Mucosa of descending colon (tissue), 3 donors: ENCODE measurements at regions of chr1 and their contacts with region 1.

Region 1: GRCh38 chr1:184881941-184882913 is 92.1 kb downstream of the NIBAN1 start:
- DNase-seq: no peak
- ATAC-seq: peak; percentile 29
- H3K4me3 ChIP-seq: no peak overlapping the region
- H3K4me1 ChIP-seq: no peaks in the 10 kb centered on the region
- CTCF ChIP-seq: no peak

Region 2: DNA sequence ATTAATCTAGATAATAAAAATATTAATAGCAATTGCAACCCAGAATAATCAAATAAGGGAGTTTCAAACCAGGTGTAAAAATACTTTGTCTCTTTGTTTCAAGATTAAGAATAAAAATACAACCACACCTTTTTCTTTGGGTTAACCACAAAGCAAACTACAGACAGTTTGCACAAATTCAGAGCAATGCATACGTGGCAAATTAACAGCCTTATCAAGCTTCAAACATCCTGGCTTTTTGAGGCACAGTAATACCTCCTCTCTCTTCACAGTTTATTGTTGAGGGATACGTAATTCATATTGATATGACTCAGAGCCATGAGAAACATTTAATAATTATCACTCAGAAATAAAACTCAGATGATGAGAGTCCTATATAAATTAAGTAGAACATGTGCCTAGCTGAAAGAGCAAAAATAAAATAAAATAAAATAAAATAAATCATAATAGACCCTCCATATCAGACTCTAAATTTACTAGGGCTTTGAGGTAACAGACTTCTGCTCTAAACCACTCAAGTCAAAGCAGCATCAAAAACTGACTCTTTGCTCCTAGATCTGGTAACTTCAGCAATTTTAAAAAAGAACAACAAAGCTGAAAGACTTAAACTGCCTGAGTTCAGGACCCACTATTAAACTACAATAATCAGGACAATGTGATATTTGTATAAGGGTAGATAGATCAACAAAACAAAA is 139.0 kb before region 1 on chr1:
- intact Hi-C with region 1: no loop called
- DNase-seq: no peak
- ATAC-seq: peak; percentile 78
- H3K4me3 ChIP-seq: no peak overlapping the region
- H3K4me1 ChIP-seq: peaks cover 13% of the 10 kb centered on the region
- CTCF ChIP-seq: no peak

Region 3: DNA sequence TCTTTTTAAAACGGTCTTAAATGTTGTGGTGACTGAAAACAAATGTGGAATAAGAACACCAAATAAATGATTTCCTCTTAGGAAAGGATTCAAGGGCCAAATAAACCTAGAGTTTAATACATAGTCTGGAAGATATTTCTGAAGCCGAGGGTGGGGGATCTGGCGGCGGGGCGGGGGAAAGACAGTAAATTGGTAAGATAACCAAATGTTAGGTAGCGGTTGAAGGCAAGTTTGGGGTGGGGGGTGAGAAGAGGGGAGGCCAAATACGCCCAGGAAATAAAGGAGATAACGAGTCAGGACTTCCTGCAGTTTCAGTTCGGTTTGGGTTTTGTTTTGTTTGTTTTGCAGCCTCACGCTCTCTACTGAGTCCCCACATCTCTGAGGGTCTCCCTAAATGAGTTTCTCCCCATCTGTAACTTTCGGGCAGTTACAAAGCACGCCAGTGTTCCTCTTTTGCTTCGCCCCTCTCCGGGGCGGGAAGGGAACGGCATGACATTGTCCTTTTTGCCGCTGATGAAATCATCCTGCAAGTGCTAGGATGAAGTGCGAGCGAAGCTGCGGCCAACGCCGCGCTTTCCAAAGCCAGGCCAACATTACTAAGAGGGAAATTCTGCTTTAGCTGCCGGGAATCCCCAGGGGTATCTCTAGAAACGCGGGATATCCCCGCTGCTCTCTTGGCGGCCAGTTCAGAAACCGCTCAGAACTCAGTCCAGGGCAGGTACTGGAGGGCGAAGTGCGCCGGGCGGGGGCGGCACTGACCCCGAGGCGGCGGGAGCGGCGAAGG is 91.2 kb after region 1 on chr1:
- intact Hi-C with region 1: loop called in 1 of 2 experiments (anchors 10 kb)
- DNase-seq: peak in 2 of 3 donors; percentile 29 to 64
- ATAC-seq: peak; percentile 55
- H3K4me3 ChIP-seq: peak overlapping the region; percentile 40
- H3K4me1 ChIP-seq: peaks cover 7% of the 10 kb centered on the region
- CTCF ChIP-seq: no peak